B cell (primary cell): ENCODE measurements at regions of chr19 and their contacts with region 1.

Region 1: DNA sequence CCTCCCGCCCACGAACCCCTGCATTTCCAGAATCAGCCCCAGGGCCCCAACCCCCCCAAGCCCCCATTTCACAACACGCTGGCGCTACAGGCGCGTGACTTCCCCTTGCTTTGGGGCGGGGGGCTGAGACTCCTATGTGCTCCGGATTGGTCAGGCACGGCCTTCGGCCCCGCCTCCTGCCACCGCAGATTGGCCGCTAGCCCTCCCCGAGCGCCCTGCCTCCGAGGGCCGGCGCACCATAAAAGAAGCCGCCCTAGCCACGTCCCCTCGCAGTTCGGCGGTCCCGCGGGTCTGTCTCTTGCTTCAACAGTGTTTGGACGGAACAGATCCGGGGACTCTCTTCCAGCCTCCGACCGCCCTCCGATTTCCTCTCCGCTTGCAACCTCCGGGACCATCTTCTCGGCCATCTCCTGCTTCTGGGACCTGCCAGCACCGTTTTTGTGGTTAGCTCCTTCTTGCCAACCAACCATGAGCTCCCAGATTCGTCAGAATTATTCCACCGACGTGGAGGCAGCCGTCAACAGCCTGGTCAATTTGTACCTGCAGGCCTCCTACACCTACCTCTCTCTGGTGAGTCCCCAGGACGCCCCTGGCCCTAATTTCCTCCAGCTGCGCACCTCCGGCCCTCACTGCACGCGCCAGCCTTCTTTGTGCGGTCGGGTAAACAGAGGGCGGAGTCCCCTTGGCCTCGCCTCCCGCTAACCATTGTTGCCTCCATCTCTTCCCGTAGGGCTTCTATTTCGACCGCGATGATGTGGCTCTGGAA is at the start of gene FTL:
- DNase-seq: peak; percentile 96
- ATAC-seq: peak; percentile 83
- H3K4me3 ChIP-seq: peak within 1 kb of the TSS; percentile 73 to 90 (median 84)
- H3K4me3 Mint-ChIP-seq: peak within 1 kb of the TSS; percentile 100
- H3K27ac ChIP-seq: peak within 1 kb of the TSS; percentile 75 to 84
- H3K27ac Mint-ChIP-seq: peak within 1 kb of the TSS; percentile 99
- H3K4me1 ChIP-seq: peaks cover 41 to 57% of the 10 kb centered on the region in 2 donors
- H3K4me1 Mint-ChIP-seq: peaks cover 70% of the 10 kb centered on the region
- H3K27me3 ChIP-seq: no peaks in the 10 kb centered on the region
- H3K27me3 Mint-ChIP-seq: no peaks in the 10 kb centered on the region
- CTCF ChIP-seq: no peak
- total RNA-seq, gene FTL: 881 and 937 TPM in 2 replicates

Region 2: DNA sequence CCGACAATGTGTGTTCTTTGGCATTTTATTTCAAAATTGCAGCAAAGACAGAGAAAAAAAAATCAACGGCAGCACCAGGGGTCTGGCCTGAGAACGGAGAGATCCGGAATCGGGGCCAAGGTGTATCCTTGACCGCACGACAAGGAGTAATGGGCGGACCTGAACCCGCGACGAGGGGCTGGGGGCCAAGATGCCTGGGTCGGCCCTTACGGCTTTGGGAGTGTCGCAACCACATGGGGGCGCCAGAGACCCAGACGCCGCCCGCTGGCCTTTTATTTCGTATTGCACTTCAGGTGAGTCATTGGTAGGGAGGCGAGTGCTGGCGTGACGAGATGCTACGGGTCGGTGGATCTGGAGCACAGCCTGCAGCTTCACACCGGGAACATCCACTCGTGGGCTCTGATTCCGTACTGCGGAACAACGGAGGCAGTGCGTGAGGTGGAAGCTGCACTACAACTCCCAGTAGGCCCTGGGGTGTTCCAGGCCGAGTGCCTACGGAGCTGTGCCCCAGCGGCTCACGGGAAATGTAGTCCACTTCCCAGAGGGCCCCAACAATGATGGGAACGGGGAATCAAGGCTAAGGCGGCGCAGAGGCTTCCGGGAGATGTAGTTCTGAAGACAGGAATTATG is 170.1 kb before region 1 on chr19:
- CTCF ChIA-PET with region 1: interaction called, 70 read pairs
- POLR2A ChIA-PET with region 1: interaction called, 3 read pairs
- intact Hi-C with region 1: loop called (anchors 1 kb)
- DNase-seq: peak; percentile 93
- ATAC-seq: peak; percentile 98
- H3K4me3 ChIP-seq: peak overlapping the region; percentile 42 to 68 (median 60)
- H3K4me3 Mint-ChIP-seq: peak overlapping the region; percentile 98
- H3K27ac ChIP-seq: peak overlapping the region; percentile 30 to 62
- H3K27ac Mint-ChIP-seq: peak overlapping the region; percentile 93
- H3K4me1 ChIP-seq: peaks cover 3 to 10% of the 10 kb centered on the region in 2 donors
- H3K4me1 Mint-ChIP-seq: peaks cover 11% of the 10 kb centered on the region
- H3K27me3 ChIP-seq: no peaks in the 10 kb centered on the region
- H3K27me3 Mint-ChIP-seq: no peaks in the 10 kb centered on the region
- CTCF ChIP-seq: peak; percentile 96

Region 3: DNA sequence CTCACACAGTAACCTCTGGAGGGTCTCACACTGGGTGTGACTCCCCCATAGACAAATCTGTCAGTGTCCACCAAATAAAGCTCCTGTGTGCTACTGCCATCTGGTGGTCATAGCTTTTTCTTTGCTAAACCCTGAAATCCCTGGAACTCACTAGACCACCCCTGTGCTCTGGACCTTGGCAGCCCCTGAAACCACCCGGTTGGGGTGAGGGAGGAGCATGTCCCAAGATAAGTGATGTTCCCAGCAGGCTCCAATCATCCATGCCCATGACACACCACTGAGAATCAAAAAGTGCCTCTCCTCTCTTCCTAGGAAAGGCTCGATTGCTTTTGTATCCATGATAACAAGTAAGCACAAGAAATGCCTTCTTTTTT is 122.4 kb before region 1 on chr19:
- CTCF ChIA-PET with region 1: interaction called, 64 read pairs
- POLR2A ChIA-PET with region 1: interaction called, 4 read pairs
- intact Hi-C with region 1: no loop called
- DNase-seq: peak; percentile 79
- ATAC-seq: peak; percentile 71
- H3K4me3 ChIP-seq: no peak overlapping the region
- H3K4me3 Mint-ChIP-seq: no peak overlapping the region
- H3K27ac ChIP-seq: no peak overlapping the region
- H3K27ac Mint-ChIP-seq: no peak overlapping the region
- H3K4me1 ChIP-seq: no peaks in the 10 kb centered on the region
- H3K4me1 Mint-ChIP-seq: peaks cover 3% of the 10 kb centered on the region
- H3K27me3 ChIP-seq: no peaks in the 10 kb centered on the region
- H3K27me3 Mint-ChIP-seq: no peaks in the 10 kb centered on the region
- CTCF ChIP-seq: peak; percentile 82

Region 4: GRCh38 chr19:48899781-48900476 is 65.3 kb before region 1 on chr19 and contains the start of gene NUCB1:
- CTCF ChIA-PET with region 1: interaction called, 3 read pairs
- POLR2A ChIA-PET with region 1: interaction called, 4 read pairs
- intact Hi-C with region 1: loop called (anchors 2 kb)
- DNase-seq: peak; percentile 96
- ATAC-seq: peak; percentile 99
- H3K4me3 ChIP-seq: peak within 1 kb of the TSS; percentile 62 to 95 (median 82)
- H3K4me3 Mint-ChIP-seq: peak within 1 kb of the TSS; percentile 96
- H3K27ac ChIP-seq: peak within 1 kb of the TSS; percentile 61 to 83
- H3K27ac Mint-ChIP-seq: peak within 1 kb of the TSS; percentile 91
- H3K4me1 ChIP-seq: peaks cover 18 to 35% of the 10 kb centered on the region in 2 donors
- H3K4me1 Mint-ChIP-seq: peaks cover 31% of the 10 kb centered on the region
- H3K27me3 ChIP-seq: peaks cover 0 to 25% (median 6%) of the 10 kb centered on the region in 4 experiments
- H3K27me3 Mint-ChIP-seq: peaks cover 11% of the 10 kb centered on the region
- CTCF ChIP-seq: no peak
- total RNA-seq, gene NUCB1: 134 and 136 TPM in 2 replicates

Region 5: DNA sequence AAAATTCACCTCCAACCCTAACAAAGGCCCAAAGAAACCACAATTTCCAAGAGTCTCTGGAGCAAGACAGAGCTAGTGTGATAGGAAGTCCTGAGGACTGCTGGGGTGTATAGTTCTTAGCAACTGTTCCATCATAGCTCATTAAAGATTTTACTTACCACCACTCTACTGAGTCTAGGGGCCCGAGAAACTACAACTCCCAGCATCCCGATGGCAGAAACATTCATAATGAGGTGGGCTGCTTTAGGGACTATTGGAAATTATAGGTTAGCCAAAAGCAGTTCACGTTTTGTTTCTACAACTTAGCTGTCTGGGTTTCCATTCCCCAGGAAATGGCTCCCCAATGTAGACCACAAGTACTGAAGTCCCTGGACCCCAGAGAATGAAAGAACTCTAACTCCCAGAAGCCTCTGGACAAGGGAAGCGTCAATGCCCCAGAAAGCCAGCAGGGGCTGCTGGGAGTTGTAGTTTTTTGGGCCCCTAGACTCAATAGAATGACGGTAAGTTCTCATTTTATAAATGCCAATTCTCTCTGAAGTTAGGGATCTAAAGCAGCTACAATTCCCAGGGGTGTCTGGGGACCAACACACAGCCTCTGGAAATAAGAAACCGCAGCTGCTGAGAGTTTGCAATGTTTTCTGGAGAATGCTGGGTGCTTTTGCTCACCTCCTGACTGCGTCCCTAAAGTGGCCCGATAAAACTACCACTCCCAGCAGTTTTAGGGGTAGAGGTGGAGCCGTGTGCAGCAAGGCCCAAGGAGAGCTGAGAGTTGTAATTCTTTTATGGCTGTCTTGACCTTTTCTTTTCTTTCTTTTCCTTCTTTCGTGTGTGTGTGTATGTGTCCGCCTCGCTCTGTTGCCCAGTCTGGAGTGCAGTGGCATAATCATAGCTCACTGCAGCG is 11.0 kb after region 1 on chr19:
- CTCF ChIA-PET with region 1: interaction called, 8 read pairs
- POLR2A ChIA-PET with region 1: interaction called, 13 read pairs
- intact Hi-C with region 1: no loop called
- DNase-seq: peak; percentile 62
- ATAC-seq: peak; percentile 66
- H3K4me3 ChIP-seq: no peak overlapping the region
- H3K4me3 Mint-ChIP-seq: no peak overlapping the region
- H3K27ac ChIP-seq: no peak overlapping the region
- H3K27ac Mint-ChIP-seq: peak overlapping the region; percentile 32
- H3K4me1 ChIP-seq: peaks cover 0 to under 1% of the 10 kb centered on the region in 2 donors
- H3K4me1 Mint-ChIP-seq: peaks cover 4% of the 10 kb centered on the region
- H3K27me3 ChIP-seq: no peaks in the 10 kb centered on the region
- H3K27me3 Mint-ChIP-seq: no peaks in the 10 kb centered on the region
- CTCF ChIP-seq: no peak